ENCODE measurements at regions of chr7 and their contacts with region 1.

Region 1: DNA sequence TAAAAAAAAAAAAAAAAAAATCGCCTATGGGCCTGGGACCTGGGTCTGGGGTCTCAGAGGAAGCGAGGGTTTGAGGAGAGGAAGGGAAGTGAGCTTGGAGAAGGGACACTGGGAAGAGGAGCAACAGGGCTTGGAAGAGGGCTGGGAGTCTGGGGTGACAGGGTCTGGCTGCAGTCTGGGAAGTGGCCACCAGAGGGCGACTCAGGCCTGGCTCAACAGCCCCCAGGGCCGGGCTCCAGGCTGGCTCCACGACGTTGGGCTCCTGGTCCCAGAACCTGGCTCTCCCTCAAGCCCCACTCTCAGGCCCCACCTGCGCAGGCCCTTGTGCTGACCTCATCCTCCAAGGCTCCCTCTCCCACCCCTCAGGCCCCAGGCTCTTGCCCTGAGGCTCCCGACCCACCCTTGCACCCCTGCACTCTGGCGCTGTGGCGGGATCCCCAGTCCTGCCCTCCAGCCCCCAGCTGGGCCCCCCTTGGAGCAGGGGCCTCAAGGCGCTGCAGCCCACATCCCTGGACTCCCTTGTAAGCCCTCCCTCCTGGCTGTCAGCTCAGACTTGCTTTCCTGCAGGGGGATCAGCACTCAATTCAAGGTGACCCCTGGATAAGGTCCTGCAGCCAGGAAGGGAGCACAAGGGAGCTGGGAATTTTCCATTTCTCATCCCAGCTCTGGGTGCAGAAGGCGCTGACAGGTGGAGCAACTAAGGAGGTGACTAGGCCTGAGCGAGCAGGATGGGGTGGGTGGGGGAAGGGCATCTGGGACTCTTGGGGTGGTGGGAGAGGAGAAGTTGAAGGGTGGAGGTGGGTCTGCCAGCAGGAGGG is 5.4 kb upstream of the SPACDR start:
- DNase-seq: peak; percentile 85 to 93 (median 90)
- H3K4me3 ChIP-seq: peak overlapping the region in 2 of 59 donors; percentile 16 to 21
- H3K27ac ChIP-seq: peak overlapping the region in 53 of 59 donors; percentile 31 to 100 (median 97)
- H3K27me3 ChIP-seq: no peaks in the 10 kb centered on the region
- CTCF ChIP-seq: peak; percentile 81 to 99 (median 94)

Region 2: DNA sequence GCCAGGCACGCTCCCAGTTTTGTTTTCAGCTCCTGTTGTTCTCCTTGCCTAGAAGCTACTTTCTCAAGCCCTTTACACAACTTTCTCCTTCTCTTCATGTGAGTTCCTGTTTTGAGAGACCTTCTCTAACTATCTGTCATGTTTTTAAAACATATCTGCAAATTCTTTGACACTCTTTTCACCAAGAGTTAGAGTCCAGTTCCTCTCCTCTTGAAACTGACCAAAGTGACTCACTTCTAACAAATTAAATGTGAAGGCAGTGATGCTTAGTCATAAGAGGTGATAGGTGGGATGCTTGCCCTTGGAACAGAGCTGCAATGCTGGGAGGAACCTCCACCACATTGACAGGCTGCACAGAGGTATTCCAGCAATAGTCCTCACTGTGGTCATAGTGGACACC is 827.4 kb before region 1 on chr7:
- intact Hi-C with region 1: no loop called
- DNase-seq: no peak
- H3K4me3 ChIP-seq: no peak overlapping the region
- H3K27ac ChIP-seq: no peak overlapping the region
- H3K27me3 ChIP-seq: no peaks in the 10 kb centered on the region
- CTCF ChIP-seq: no peak

Region 3: GRCh38 chr7:100428967-100429636 is 40.3 kb before region 1 on chr7:
- intact Hi-C with region 1: loop called (anchors 1 kb)
- DNase-seq: peak; percentile 99 to 100 (median 100)
- H3K4me3 ChIP-seq: peak overlapping the region; percentile 67 to 99 (median 88)
- H3K27ac ChIP-seq: peak overlapping the region; percentile 98 to 100 (median 100)
- H3K27me3 ChIP-seq: no peaks in the 10 kb centered on the region
- CTCF ChIP-seq: peak in 7 of 56 donors; percentile 4 to 21 (median 9)

Region 4: DNA sequence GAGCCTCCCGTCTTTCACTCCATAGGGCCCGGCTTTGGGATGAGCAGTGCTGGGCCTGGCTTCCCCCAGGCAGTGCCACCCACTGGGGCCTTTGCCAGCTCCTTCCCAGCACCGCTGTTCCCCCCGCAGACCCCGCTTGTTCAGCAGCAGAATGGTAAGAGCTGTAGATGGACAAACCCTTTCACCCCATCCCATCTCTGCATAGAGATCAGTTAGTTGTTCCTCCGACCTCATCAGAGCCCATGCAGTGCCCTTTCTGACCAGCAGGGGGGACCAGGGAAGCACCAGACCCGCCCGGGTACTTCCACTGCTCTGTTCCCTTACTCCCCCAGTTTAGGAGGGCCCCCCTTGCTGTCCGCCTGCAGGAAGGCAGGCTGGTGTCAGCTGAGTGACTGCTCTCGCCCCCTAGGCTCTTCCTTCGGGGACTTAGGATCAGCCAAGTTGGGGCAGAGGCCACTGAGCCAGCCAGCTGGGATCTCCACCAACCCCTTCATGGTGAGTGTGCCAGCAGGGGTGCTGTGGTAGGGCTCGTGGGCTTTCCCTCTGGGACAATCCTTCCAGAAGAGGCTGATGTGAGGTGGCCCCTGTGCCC is 94.5 kb after region 1 on chr7:
- intact Hi-C with region 1: loop called (anchors 1 to 2 kb)
- DNase-seq: peak; percentile 69 to 83 (median 79)
- H3K4me3 ChIP-seq: no peak overlapping the region
- H3K27ac ChIP-seq: peak overlapping the region in 7 of 59 donors; percentile 3 to 51 (median 28)
- H3K27me3 ChIP-seq: no peaks in the 10 kb centered on the region
- CTCF ChIP-seq: peak; percentile 61 to 95 (median 90)

Region 5: DNA sequence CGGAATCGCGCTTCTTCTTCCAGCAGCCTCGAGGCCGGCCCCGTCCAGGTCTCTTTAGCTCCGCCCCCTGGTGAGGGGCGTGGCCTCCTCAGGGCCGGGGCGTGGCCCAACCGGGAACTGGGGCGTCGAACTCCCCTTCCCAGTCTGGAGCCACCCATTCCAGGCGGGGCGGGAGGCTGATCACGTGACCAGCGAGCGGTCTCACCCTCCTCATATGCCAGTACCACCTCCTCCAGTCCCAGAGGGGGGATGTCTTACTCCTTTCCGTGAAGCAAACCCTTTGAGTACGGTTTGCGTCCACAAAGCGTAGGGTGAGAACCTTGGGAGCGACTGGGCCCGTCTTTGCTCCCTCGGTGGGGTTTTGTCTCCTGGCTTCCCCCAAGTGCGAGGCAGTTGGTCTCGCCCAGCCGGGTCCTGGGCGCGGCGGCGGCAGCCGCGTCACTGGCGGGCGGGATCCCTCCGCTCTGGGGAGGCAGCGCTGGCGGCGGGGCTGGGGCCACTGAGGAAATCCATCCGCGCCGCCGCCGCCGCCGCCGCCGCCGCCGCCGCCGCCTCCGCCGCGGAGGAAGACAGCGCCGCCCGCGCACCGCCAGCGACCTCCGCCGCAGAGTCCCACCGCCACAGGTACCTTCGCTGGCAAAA is 204.0 kb after region 1 on chr7 and contains the start of gene GNB2:
- intact Hi-C with region 1: loop called in 1 of 2 experiments (anchors 5 kb)
- DNase-seq: peak; percentile 98 to 100 (median 99)
- H3K4me3 ChIP-seq: peak within 1 kb of the TSS; percentile 67 to 98 (median 89)
- H3K27ac ChIP-seq: peak within 1 kb of the TSS; percentile 85 to 99 (median 97)
- H3K27me3 ChIP-seq: no peaks in the 10 kb centered on the region
- CTCF ChIP-seq: peak in 16 of 56 donors; percentile 3 to 38 (median 19)
- total RNA-seq, gene GNB2: 119 to 205 (median 150) TPM

Region 6: DNA sequence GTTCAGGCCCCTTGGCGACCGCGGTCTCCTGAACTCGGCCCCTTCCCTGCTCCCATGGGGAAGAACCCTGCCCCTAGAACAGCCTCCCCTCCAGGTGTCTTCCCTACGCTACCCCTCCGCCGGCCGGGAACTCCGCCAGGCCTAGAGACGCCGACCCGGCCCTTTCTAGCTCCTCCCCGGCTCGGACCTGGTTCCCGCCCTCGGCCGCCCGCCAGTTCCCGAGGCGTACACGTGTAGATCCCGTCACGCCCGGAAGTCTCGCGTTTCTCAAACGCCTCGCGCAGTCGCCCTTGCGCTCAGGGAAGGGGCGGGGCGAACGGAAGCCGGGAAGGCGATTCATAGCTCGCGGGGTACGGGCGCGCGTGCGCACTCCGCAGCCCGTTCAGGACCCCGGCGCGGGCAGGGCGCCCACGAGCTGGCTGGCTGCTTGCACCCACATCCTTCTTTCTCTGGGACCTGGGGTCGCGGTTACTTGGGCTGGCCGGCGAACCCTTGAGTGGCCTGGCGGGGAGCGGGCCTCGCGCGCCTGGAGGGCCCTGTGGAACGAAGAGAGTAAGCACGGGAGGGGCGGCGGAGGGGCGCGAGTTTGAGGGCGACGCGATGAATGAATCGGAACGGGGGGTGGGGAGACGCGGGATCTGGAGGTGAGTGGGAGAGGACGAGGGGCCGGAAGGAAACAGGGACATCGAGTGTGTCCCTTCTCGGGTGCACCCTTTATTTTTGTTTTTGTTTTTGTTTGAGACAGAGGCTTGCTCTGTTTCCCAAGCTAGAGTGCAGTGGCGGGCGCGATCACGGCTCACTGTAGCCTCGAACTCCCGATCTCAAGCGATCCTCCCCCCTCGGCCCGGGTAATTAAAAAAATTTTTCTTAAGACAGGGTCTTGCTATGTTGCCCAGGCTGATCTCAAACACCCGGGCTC is 236.6 kb after region 1 on chr7 and contains the start of gene POP7:
- intact Hi-C with region 1: loop called in 1 of 2 experiments (anchors 5 kb)
- DNase-seq: peak; percentile 94 to 97 (median 96)
- H3K4me3 ChIP-seq: peak within 1 kb of the TSS; percentile 62 to 100 (median 88)
- H3K27ac ChIP-seq: peak within 1 kb of the TSS; percentile 21 to 98 (median 92)
- H3K27me3 ChIP-seq: no peaks in the 10 kb centered on the region
- CTCF ChIP-seq: peak in 5 of 56 donors; percentile 2 to 31 (median 20)
- total RNA-seq, gene POP7: 20.7 to 61.9 (median 42.4) TPM

Region 7: DNA sequence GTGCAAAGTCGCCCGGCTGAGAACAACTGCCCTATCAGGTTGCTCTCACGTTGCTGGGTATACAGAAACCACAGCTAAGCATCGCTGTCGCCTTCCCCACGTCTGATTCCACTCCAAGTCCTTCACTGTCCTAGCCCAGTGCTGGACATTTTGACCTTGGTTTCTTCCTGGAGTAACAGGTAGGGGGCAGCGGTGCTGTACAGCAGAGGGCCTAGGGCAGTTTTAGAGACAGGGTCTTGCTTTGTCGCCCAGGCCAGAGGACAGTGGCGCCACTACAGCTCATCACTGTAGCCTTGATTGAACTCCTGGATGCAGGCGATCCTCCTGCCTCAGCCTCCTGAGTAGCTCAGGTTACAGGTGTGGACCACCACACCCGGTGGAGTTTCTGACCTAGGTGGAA is 765.6 kb after region 1 on chr7:
- intact Hi-C with region 1: no loop called
- DNase-seq: no peak
- H3K4me3 ChIP-seq: no peak overlapping the region
- H3K27ac ChIP-seq: peak overlapping the region in 1 of 59 donors; percentile 10
- H3K27me3 ChIP-seq: no peaks in the 10 kb centered on the region
- CTCF ChIP-seq: peak in 38 of 56 donors; percentile 8 to 53 (median 35)